Activated B cell treated with CpG ODN at 0.5 μM for 24 hours (primary cell): ENCODE measurements at regions of chr3 and their contacts with region 1.

Region 1: GRCh38 chr3:124761250-124761796 is 31.1 kb downstream of the UMPS start:
- DNase-seq: peak; percentile 53
- ATAC-seq: peak; percentile 72
- H3K4me3 Mint-ChIP-seq: peak overlapping the region; percentile 50
- H3K27ac Mint-ChIP-seq: no peak overlapping the region
- H3K4me1 Mint-ChIP-seq: peaks cover 4% of the 10 kb centered on the region
- H3K27me3 Mint-ChIP-seq: peaks cover 3% of the 10 kb centered on the region
- CTCF ChIP-seq: peak; percentile 88

Region 2: DNA sequence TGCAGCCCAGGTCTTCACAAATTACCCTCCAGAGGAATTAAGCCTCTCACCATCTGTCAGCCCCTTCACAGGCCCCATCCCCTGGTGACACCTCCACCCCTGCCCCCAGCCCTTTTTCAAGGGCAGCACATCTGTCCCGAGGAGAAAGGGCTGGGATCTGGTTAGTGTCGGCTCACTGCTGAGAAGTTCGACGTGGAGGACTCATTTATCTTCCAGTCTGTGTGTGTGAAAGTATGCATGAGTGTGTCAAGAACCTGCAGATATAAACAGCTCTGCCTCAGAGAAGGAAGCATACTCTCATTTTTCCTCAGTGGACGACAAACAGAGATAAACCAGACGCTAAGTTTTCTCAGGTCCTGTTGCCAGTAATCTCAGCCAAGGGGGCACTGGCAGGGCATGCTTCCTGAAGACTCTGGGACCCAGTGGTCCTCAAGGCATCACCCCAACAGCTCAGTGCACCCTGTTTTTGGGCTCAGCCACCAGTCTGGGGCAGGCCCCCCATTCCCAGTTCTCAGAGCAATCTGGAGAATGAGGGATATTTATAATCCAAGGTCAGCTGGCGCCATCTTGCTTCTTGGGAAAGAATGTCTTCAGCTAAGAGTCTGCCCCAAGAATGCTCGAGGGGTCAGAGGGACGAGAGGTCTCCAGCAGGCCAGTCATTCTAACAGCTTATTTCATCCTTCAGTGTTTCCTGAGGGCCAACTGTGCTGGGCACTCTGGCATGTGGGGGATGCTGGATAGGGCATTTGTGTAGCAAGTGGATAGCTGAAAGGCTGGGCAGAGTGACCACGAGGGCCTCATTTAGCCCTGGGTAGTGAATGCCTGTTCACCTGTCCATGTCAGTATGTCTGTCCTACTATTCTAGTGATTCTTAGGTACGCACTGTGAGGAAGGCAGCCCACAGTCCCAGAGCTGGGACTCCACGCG is 1386.0 kb before region 1 on chr3:
- CTCF ChIA-PET with region 1: no interaction called
- POLR2A ChIA-PET with region 1: no interaction called
- intact Hi-C with region 1: no loop called
- DNase-seq: no peak
- ATAC-seq: no peak
- H3K4me3 Mint-ChIP-seq: no peak overlapping the region
- H3K27ac Mint-ChIP-seq: no peak overlapping the region
- H3K4me1 Mint-ChIP-seq: no peaks in the 10 kb centered on the region
- H3K27me3 Mint-ChIP-seq: peaks cover 11% of the 10 kb centered on the region
- CTCF ChIP-seq: no peak

Region 3: DNA sequence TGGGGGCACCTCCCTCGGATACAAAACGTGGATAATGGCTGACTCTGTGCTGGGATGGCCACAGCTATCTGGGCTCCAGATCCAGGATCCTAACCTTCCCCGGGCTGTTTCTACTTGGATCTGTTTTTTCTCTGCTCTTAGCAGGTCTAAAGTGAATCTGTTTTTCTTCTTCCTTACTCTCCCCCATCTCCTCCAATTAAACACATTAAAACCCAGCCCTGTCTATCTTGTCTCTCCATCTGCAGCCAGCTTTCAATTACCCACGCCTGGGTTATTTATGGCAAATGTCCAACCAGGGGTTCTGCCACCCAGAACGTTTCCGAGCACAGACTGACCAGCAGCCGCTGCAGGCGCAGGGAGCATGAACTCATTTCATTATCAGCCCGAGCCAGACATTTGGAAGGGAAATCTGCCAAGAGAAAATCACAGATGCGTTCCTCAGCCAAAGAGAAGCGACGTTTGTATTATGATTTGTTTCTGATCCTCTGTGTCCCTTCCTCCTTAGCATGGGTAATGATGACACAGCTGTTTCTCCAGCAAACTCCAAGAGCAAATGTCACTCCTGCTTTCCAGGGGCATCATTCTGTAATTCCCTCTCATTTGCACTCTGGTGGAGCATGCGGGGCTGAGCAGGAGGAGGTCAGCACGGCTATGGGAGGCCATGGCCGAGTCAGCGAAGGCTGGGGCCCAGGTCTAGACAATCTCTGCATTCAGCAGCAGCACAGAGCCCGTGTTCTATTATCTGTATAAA is 10.9 kb after region 1 on chr3:
- CTCF ChIA-PET with region 1: interaction called, 11 read pairs
- POLR2A ChIA-PET with region 1: no interaction called
- intact Hi-C with region 1: no loop called
- DNase-seq: no peak
- ATAC-seq: no peak
- H3K4me3 Mint-ChIP-seq: no peak overlapping the region
- H3K27ac Mint-ChIP-seq: no peak overlapping the region
- H3K4me1 Mint-ChIP-seq: no peaks in the 10 kb centered on the region
- H3K27me3 Mint-ChIP-seq: peaks cover 27% of the 10 kb centered on the region
- CTCF ChIP-seq: no peak

Region 4: DNA sequence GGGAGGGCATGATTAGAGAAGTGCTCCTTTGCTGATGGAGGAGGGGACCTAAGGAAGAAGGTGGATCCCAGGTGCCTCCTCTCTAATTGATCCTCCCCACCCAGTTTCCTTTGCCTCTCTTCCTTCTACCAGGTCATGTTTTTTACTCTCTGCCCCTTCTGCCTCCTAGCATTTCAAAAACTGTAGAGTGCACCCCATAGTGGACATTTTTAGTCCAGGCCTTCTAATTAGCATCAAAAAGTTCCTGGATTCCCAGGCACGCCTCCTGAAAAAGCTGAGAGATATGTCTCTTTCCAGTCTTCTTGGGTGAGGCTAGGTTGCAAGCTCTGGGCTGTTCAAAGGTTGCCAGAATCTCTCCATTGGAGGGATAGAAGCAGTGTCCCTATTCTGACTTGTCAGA is 144.5 kb after region 1 on chr3:
- CTCF ChIA-PET with region 1: interaction called, 37 read pairs
- POLR2A ChIA-PET with region 1: no interaction called
- intact Hi-C with region 1: loop called (anchors 1 kb)
- DNase-seq: no peak
- ATAC-seq: no peak
- H3K4me3 Mint-ChIP-seq: no peak overlapping the region
- H3K27ac Mint-ChIP-seq: no peak overlapping the region
- H3K4me1 Mint-ChIP-seq: no peaks in the 10 kb centered on the region
- H3K27me3 Mint-ChIP-seq: peaks cover 18% of the 10 kb centered on the region
- CTCF ChIP-seq: no peak

Region 5: GRCh38 chr3:125119752-125120378 is 358.5 kb after region 1 on chr3:
- CTCF ChIA-PET with region 1: no interaction called
- POLR2A ChIA-PET with region 1: no interaction called
- intact Hi-C with region 1: no loop called
- DNase-seq: no peak
- ATAC-seq: peak; percentile 84
- H3K4me3 Mint-ChIP-seq: peak overlapping the region; percentile 74
- H3K27ac Mint-ChIP-seq: peak overlapping the region; percentile 62
- H3K4me1 Mint-ChIP-seq: peaks cover 32% of the 10 kb centered on the region
- H3K27me3 Mint-ChIP-seq: no peaks in the 10 kb centered on the region
- CTCF ChIP-seq: no peak

Region 6: GRCh38 chr3:125437631-125438435 is 676.5 kb after region 1 on chr3:
- CTCF ChIA-PET with region 1: interaction called, 24 read pairs
- POLR2A ChIA-PET with region 1: no interaction called
- intact Hi-C with region 1: loop called (anchors 1 kb)
- DNase-seq: peak; percentile 42
- ATAC-seq: peak; percentile 57
- H3K4me3 Mint-ChIP-seq: no peak overlapping the region
- H3K27ac Mint-ChIP-seq: no peak overlapping the region
- H3K4me1 Mint-ChIP-seq: no peaks in the 10 kb centered on the region
- H3K27me3 Mint-ChIP-seq: no peaks in the 10 kb centered on the region
- CTCF ChIP-seq: peak; percentile 95

Region 7: DNA sequence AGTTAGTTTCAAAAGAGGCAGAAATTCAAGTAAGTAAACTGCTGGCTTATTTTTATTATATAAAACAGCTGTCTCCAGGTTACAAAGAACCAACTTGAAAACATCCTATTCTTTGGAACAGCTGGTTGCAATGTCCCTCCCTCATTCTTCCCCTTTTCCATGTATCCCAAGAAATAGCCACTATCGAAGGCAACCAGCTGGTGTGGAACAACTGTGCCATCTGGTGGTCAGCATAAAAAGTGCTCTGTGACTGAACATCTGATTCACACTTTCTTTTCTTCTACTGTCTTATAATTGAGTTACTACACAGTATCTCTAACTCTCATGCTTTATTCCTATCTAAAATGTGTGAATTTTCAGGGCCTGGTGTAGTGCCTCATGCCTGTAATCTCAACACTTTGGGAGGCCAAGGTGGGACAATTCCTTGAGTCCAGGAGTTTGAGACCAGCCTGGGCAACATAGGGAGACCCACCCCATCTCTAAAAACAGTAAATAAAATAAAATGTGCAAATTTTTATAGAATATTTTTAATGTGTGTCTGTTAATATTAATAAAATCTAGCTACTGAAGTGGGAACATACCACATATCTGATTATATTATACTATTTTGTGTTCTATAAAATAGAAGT is 824.4 kb after region 1 on chr3:
- CTCF ChIA-PET with region 1: interaction called, 21 read pairs
- POLR2A ChIA-PET with region 1: no interaction called
- intact Hi-C with region 1: loop called (anchors 1 kb)
- DNase-seq: no peak
- ATAC-seq: no peak
- H3K4me3 Mint-ChIP-seq: no peak overlapping the region
- H3K27ac Mint-ChIP-seq: no peak overlapping the region
- H3K4me1 Mint-ChIP-seq: peaks cover 34% of the 10 kb centered on the region
- H3K27me3 Mint-ChIP-seq: no peaks in the 10 kb centered on the region
- CTCF ChIP-seq: peak; percentile 59